ENCODE measurements at regions of chr11 and their contacts with region 1.

Region 1: GRCh38 chr11:1546536-1547400 is 25.3 kb downstream of the DUSP8 start:
- DNase-seq: peak; percentile 74
- H3K4me3 Mint-ChIP-seq: peak overlapping the region; percentile 62
- H3K27ac Mint-ChIP-seq: no peak overlapping the region
- H3K4me1 Mint-ChIP-seq: no peaks in the 10 kb centered on the region
- H3K27me3 Mint-ChIP-seq: peaks cover 42% of the 10 kb centered on the region
- CTCF ChIP-seq: peak; percentile 94

Region 2: DNA sequence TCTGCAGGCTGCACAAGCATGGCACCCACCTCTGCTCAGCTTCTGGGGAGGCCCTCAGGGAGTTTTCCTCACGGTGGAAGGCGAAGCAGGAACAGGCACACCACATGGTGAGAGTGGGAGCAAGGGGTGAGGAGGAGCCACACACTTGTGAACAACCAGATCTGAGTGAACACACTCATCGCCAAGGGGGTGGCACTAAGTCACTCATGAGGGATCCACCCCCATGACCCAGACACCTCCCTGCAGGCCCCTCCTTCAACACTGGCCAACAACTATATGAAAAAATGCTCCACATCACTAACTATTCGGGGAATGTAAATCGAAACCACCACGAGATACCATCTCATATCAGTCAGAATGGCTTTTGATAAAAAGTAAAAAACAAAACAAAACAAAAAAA is 52.0 kb after region 1 on chr11:
- CTCF ChIA-PET with region 1: interaction called, 14 read pairs
- intact Hi-C with region 1: no loop called
- DNase-seq: no peak
- H3K4me3 Mint-ChIP-seq: no peak overlapping the region
- H3K27ac Mint-ChIP-seq: no peak overlapping the region
- H3K4me1 Mint-ChIP-seq: no peaks in the 10 kb centered on the region
- H3K27me3 Mint-ChIP-seq: peaks cover 100% of the 10 kb centered on the region
- CTCF ChIP-seq: no peak

Measured in Calu3 (cell line).